GM12878 (cell line): ENCODE measurements at regions of chr15 and their contacts with region 1.

Region 1: GRCh38 chr15:90233376-90234095 is at the start of gene CIB1:
- DNase-seq: no peak
- ATAC-seq: peak; percentile 88
- H3K4me3 ChIP-seq: peak within 1 kb of the TSS; percentile 79
- H3K27ac ChIP-seq: peak within 1 kb of the TSS; percentile 85
- H3K4me1 ChIP-seq: peaks cover 28% of the 10 kb centered on the region
- H3K27me3 ChIP-seq: no peaks in the 10 kb centered on the region
- CTCF ChIP-seq: peak in 2 of 3 experiments; percentile 44 to 61; a peak in 3 of 6 replicates
- EP300 ChIP-seq: peak in 1 of 2 experiments; percentile 8; a peak in 1 of 4 replicates
- POLR2A ChIP-seq: peak; percentile 89
- RAD21 ChIP-seq: no peak
- polyA plus RNA-seq, gene CIB1: 10.8 to 42.5 TPM

Region 2: DNA sequence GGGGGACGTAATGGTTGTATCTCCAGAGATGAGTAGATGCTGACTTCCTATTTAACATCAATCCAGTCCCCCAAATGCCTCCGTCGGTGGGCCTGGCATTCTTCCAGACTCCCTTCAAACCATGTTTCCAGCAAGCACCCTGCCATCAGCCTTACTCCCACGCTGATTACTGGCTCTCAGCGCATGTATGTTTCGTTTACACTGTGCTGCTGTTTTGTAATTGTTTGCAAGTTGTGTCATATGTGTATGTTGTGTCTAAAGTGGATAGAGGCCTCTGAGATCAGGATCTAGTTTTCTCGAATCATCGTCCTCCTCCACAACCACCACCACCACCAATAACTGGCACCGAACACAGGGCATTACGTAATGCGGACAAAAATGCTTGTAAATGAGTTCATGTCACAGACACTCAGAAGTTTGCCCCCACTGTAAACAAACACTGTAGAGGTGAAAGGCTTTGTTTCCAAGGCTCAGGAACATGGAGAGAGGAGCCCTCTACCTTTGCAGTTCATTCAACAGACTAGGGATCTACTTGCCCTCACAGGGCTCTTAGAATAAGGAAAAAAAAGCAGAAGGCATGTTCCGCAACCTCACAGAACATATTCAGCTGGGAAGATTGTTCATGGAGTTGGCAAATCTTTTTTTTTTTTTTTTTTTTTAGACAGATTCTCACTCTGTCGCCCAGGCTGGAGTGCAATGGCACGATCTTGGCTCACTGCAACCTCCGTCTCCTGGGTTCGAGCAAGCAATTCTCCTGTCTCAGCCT is 78.5 kb before region 1 on chr15:
- CTCF ChIA-PET with region 1: interaction called, 22 read pairs
- POLR2A ChIA-PET with region 1: interaction called, 3 read pairs
- RAD21 ChIA-PET with region 1: interaction called, 5 read pairs
- SMC1A ChIA-PET with region 1: interaction called, 70 read pairs
- in situ Hi-C with region 1: no loop called
- intact Hi-C with region 1: no loop called
- DNase-seq: no peak
- ATAC-seq: no peak
- H3K4me3 ChIP-seq: no peak overlapping the region
- H3K27ac ChIP-seq: no peak overlapping the region
- H3K4me1 ChIP-seq: peaks cover 5% of the 10 kb centered on the region
- H3K27me3 ChIP-seq: no peaks in the 10 kb centered on the region
- CTCF ChIP-seq: no peak
- EP300 ChIP-seq: no peak
- POLR2A ChIP-seq: no peak
- RAD21 ChIP-seq: no peak

Region 3: GRCh38 chr15:90191794-90192509 is 41.6 kb before region 1 on chr15:
- CTCF ChIA-PET with region 1: interaction called, 7 read pairs
- POLR2A ChIA-PET with region 1: interaction called, 30 read pairs
- RAD21 ChIA-PET with region 1: interaction called, 22 read pairs
- SMC1A ChIA-PET with region 1: interaction called, 20 read pairs
- in situ Hi-C with region 1: no loop called
- intact Hi-C with region 1: loop called (anchors 5 kb)
- DNase-seq: peak; percentile 70
- ATAC-seq: peak; percentile 92
- H3K4me3 ChIP-seq: peak overlapping the region; percentile 57; the same call in 1 of the 2 replicates
- H3K27ac ChIP-seq: peak overlapping the region; percentile 65
- H3K4me1 ChIP-seq: peaks cover 41% of the 10 kb centered on the region
- H3K27me3 ChIP-seq: no peaks in the 10 kb centered on the region
- CTCF ChIP-seq: no peak
- EP300 ChIP-seq: no peak
- POLR2A ChIP-seq: peak; percentile 61
- RAD21 ChIP-seq: no peak

Region 4: GRCh38 chr15:90214553-90215196 is 18.9 kb before region 1 on chr15:
- CTCF ChIA-PET with region 1: interaction called, 38 read pairs
- POLR2A ChIA-PET with region 1: interaction called, 5 read pairs
- RAD21 ChIA-PET with region 1: interaction called, 4 read pairs
- SMC1A ChIA-PET with region 1: interaction called, 11 read pairs
- in situ Hi-C with region 1: no loop called
- intact Hi-C with region 1: no loop called
- DNase-seq: no peak
- ATAC-seq: no peak
- H3K4me3 ChIP-seq: no peak overlapping the region
- H3K27ac ChIP-seq: no peak overlapping the region
- H3K4me1 ChIP-seq: peaks cover 23% of the 10 kb centered on the region
- H3K27me3 ChIP-seq: no peaks in the 10 kb centered on the region
- CTCF ChIP-seq: no peak
- EP300 ChIP-seq: no peak
- POLR2A ChIP-seq: no peak
- RAD21 ChIP-seq: no peak

Region 5: GRCh38 chr15:90259524-90259923 is 26.0 kb after region 1 on chr15:
- CTCF ChIA-PET with region 1: interaction called, 10 read pairs
- POLR2A ChIA-PET with region 1: interaction called, 25 read pairs
- RAD21 ChIA-PET with region 1: interaction called, 5 read pairs
- SMC1A ChIA-PET with region 1: interaction called, 7 read pairs
- in situ Hi-C with region 1: no loop called
- intact Hi-C with region 1: loop called (anchors 2 kb)
- DNase-seq: peak; percentile 65
- ATAC-seq: peak; percentile 89
- H3K4me3 ChIP-seq: no peak overlapping the region
- H3K27ac ChIP-seq: peak overlapping the region; percentile 79
- H3K4me1 ChIP-seq: peaks cover 31% of the 10 kb centered on the region
- H3K27me3 ChIP-seq: no peaks in the 10 kb centered on the region; a peak in 1 of 4 replicates
- CTCF ChIP-seq: no peak
- EP300 ChIP-seq: peak; percentile 74 to 87; a peak in 3 of 4 replicates
- POLR2A ChIP-seq: no peak
- RAD21 ChIP-seq: no peak

Region 6: GRCh38 chr15:90306560-90306959 is 73.0 kb after region 1 on chr15:
- CTCF ChIA-PET with region 1: interaction called, 12 read pairs
- POLR2A ChIA-PET with region 1: interaction called, 4 read pairs
- RAD21 ChIA-PET with region 1: interaction called, 4 read pairs
- SMC1A ChIA-PET with region 1: interaction called, 4 read pairs
- in situ Hi-C with region 1: no loop called
- intact Hi-C with region 1: no loop called
- DNase-seq: peak; percentile 36
- ATAC-seq: peak; percentile 96
- H3K4me3 ChIP-seq: peak overlapping the region; percentile 17; the same call in 1 of the 2 replicates
- H3K27ac ChIP-seq: peak overlapping the region; percentile 60
- H3K4me1 ChIP-seq: peaks cover 22% of the 10 kb centered on the region
- H3K27me3 ChIP-seq: no peaks in the 10 kb centered on the region
- CTCF ChIP-seq: peak in 1 of 3 experiments; percentile 37; a peak in 2 of 6 replicates
- EP300 ChIP-seq: no peak
- POLR2A ChIP-seq: 0 out of 2 replicates have a peak, but pooled peaks have one; percentile 28
- RAD21 ChIP-seq: peak; percentile 39